ENCODE measurements at regions of chr11 and their contacts with region 1.

Region 1: GRCh38 chr11:66222358-66223149 is 45.9 kb upstream of the RAB1B start:
- DNase-seq: peak; percentile 94
- H3K4me3 Mint-ChIP-seq: no peak overlapping the region
- H3K27ac Mint-ChIP-seq: peak overlapping the region; percentile 81
- H3K4me1 Mint-ChIP-seq: peaks cover 25% of the 10 kb centered on the region
- H3K27me3 Mint-ChIP-seq: no peaks in the 10 kb centered on the region

Region 2: DNA sequence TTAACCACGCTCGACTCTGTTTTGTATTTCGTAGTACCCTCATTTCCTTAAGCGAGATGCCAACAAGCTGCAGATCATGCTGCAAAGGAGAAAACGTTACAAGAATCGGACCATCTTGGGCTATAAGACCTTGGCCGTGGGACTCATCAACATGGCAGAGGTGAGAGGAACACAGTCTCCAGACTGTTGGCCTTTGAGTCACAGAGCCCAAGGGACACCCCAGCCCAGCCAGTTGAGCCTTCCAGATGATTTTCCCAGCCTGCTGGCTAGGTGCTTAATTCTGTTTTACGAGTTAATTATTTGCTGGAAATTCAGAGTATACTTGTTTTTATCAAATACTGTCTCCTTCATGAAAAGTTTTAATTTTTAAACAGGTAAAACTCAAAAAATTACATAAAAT is 11.5 kb before region 1 on chr11:
- CTCF ChIA-PET with region 1: interaction called, 17 read pairs
- POLR2A ChIA-PET with region 1: no interaction called
- DNase-seq: no peak
- H3K4me3 Mint-ChIP-seq: no peak overlapping the region
- H3K27ac Mint-ChIP-seq: no peak overlapping the region
- H3K4me1 Mint-ChIP-seq: peaks cover 3% of the 10 kb centered on the region
- H3K27me3 Mint-ChIP-seq: no peaks in the 10 kb centered on the region

Region 3: GRCh38 chr11:66242095-66242765 is 19.7 kb after region 1 on chr11:
- CTCF ChIA-PET with region 1: interaction called, 18 read pairs
- POLR2A ChIA-PET with region 1: no interaction called
- DNase-seq: no peak
- H3K4me3 Mint-ChIP-seq: no peak overlapping the region
- H3K27ac Mint-ChIP-seq: peak overlapping the region; percentile 41
- H3K4me1 Mint-ChIP-seq: peaks cover 16% of the 10 kb centered on the region
- H3K27me3 Mint-ChIP-seq: no peaks in the 10 kb centered on the region

Region 4: DNA sequence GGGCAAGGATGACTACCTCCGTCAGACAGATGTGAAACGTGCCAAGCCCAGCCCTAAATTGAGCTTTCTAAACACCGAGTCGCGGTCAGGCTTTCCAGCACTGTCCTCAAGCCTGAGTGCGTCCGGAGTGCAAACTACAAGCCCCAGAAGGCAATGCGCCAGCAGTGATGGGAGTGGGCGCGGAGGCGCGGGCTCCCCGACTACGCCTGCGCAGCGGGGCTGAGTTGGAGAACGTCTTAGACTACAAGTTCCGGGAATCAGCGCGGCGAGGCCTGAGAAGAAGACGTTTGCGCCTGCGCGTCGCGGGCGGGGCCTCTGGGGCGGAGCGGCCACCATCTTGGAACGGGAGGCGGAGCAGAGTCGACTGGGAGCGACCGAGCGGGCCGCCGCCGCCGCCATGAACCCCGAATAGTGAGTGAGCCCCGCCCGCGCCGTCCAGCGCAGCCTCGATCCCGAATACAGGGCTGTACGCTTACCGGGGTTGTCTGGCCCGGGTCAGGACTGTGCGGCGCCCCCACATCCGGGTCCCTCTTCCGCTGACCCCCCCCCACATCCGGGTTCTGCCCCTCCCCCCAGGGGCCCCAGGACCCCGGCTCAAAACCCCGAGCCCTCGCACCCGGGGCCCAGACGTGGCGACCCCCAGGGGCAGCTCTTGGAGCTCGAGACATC is 45.9 kb after region 1 on chr11 and contains the start of gene RAB1B:
- CTCF ChIA-PET with region 1: interaction called, 12 read pairs
- POLR2A ChIA-PET with region 1: no interaction called
- DNase-seq: peak; percentile 100
- H3K4me3 Mint-ChIP-seq: peak within 1 kb of the TSS; percentile 88
- H3K27ac Mint-ChIP-seq: peak within 1 kb of the TSS; percentile 90
- H3K4me1 Mint-ChIP-seq: peaks cover 46% of the 10 kb centered on the region
- H3K27me3 Mint-ChIP-seq: no peaks in the 10 kb centered on the region
- total RNA-seq, gene RAB1B: 151 to 174 TPM

Region 5: DNA sequence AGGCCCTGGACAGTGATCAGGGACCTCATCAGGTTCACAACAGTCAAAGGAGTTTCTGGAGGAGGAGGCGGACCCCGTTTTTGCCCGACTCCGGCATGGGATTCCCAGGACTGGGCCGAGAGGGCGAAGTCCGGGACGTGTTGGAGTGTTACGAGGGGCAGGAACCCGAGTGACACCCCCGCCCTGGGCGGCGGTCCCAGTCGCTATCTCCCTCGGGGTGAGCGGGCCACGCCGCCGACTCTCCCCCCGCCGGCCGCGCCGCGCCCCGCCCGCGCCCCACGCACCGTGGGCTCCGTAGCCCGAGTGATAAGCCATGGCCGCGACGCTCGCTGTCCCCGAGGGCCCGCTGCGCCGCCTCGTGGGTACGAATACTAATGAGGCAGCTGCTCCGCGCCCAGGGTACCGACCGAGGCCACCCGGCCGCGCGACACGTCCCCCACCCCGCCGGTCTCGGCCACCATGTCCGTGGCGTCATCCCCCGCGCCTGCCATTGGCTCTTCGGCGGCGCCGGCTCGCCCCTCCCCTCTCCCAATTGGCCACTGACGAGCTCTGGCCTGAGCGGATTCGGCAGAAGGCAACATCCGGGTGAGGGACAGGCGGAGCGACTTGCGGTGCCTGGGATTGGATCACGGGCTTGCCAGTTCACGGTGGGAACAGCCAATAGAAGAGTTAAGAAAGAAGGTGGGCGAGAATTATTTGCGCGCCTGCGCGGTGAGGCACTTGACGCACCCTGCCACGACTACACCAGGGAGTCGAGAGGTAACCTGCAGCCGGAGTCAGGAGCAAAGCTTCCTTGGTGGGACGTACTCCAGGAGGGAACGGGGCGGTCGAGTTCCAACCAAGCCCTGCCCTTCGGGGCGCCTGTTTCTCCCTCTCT is 66.4 kb after region 1 on chr11 and contains the start of gene YIF1A:
- CTCF ChIA-PET with region 1: interaction called, 27 read pairs
- POLR2A ChIA-PET with region 1: no interaction called
- DNase-seq: peak; percentile 99
- H3K4me3 Mint-ChIP-seq: peak within 1 kb of the TSS; percentile 89
- H3K27ac Mint-ChIP-seq: peak within 1 kb of the TSS; percentile 89
- H3K4me1 Mint-ChIP-seq: peaks cover 38% of the 10 kb centered on the region
- H3K27me3 Mint-ChIP-seq: peaks cover 25% of the 10 kb centered on the region
- total RNA-seq, gene YIF1A: 39.1 to 45.4 TPM

Region 6: GRCh38 chr11:66450560-66450959 is 228.0 kb after region 1 on chr11:
- CTCF ChIA-PET with region 1: no interaction called
- POLR2A ChIA-PET with region 1: no interaction called
- DNase-seq: no peak
- H3K4me3 Mint-ChIP-seq: no peak overlapping the region
- H3K27ac Mint-ChIP-seq: no peak overlapping the region
- H3K4me1 Mint-ChIP-seq: peaks cover 16% of the 10 kb centered on the region
- H3K27me3 Mint-ChIP-seq: peaks cover 6% of the 10 kb centered on the region